T-cell (primary cell): ENCODE measurements at regions of chr19 and their contacts with region 1.

Region 1: GRCh38 chr19:47142779-47143178 is 12.1 kb downstream of the SAE1 start:
- DNase-seq: no peak
- ATAC-seq: no peak
- H3K4me3 ChIP-seq: no peak overlapping the region
- H3K4me3 Mint-ChIP-seq: no peak overlapping the region
- H3K27ac ChIP-seq: no peak overlapping the region
- H3K27ac Mint-ChIP-seq: peak overlapping the region; percentile 13 to 47
- H3K4me1 ChIP-seq: peaks cover 22 to 37% of the 10 kb centered on the region in 2 experiments
- H3K4me1 Mint-ChIP-seq: peaks cover 51 to 63% (median 52%) of the 10 kb centered on the region in 3 donors
- H3K27me3 ChIP-seq: no peaks in the 10 kb centered on the region
- H3K27me3 Mint-ChIP-seq: no peaks in the 10 kb centered on the region

Region 2: DNA sequence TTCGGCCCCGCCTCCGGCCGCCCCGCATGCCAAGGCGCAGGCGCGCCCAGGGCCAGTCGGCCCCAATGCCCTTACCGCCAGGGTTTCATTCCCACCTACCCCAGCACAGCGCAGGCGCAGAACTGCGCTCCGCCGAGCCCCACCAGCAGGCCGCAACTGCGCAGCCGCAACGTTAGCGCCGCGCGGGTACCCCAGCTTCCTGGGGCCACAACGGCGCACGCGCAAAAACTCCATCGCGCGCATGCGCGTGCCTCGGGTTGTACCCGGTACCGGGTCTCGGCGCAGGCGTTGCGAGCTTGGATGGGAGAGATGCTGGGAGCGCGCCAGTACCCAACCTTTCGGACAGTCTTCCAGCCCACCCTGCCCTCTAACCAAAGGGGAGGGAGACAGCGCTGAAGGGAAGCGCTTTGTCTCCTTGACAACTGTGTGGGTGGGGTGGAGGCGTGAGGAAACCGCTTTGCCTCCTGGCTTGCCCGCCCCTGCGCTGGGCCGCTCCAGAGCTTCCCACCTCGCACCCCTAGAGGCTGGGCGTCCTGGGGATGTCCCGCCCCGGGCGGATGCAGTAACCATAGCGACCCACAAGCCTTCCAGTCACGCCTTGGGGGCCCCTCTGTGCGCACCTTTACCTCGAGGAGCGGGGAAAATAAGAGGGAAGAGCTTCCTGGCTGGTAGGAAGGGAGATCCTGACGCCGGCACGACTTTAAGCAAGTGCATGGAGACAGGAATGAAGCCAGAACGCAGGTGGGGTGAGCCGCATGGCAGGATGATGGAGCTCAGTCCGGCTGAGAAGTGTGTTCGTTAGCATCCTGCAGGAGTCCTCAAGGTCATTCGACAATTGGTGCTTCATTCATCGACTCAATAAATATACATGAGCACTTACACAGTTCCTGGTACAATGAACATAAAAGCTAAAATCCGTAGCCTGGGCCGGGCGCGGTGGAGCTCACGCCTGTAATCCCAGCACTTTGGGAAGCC is 1239.8 kb before region 1 on chr19:
- CTCF ChIA-PET with region 1: no interaction called
- POLR2A ChIA-PET with region 1: interaction called in 1 of 2 experiments, 12 read pairs
- DNase-seq: peak; percentile 96 to 100 (median 99)
- ATAC-seq: peak; percentile 85 to 89 (median 86)
- H3K4me3 ChIP-seq: peak overlapping the region; percentile 83 to 88
- H3K4me3 Mint-ChIP-seq: peak overlapping the region; percentile 91 to 95 (median 93)
- H3K27ac ChIP-seq: peak overlapping the region; percentile 78
- H3K27ac Mint-ChIP-seq: peak overlapping the region; percentile 86 to 89
- H3K4me1 ChIP-seq: peaks cover 4 to 30% of the 10 kb centered on the region in 2 experiments
- H3K4me1 Mint-ChIP-seq: peaks cover 16 to 25% (median 19%) of the 10 kb centered on the region in 3 donors
- H3K27me3 ChIP-seq: peaks cover 0 to 8% of the 10 kb centered on the region in 2 experiments
- H3K27me3 Mint-ChIP-seq: peaks cover 0 to 4% of the 10 kb centered on the region in 2 donors

Region 3: GRCh38 chr19:47047763-47048405 is 94.9 kb before region 1 on chr19:
- CTCF ChIA-PET with region 1: no interaction called
- POLR2A ChIA-PET with region 1: interaction called in 1 of 2 experiments, 17 read pairs
- DNase-seq: peak; percentile 23 to 76 (median 46)
- ATAC-seq: peak; percentile 45 to 54 (median 48)
- H3K4me3 ChIP-seq: peak overlapping the region; percentile 79 to 80
- H3K4me3 Mint-ChIP-seq: peak overlapping the region; percentile 88 to 92 (median 89)
- H3K27ac ChIP-seq: peak overlapping the region; percentile 29
- H3K27ac Mint-ChIP-seq: peak overlapping the region; percentile 72 to 88
- H3K4me1 ChIP-seq: peaks cover 0 to 19% of the 10 kb centered on the region in 2 experiments
- H3K4me1 Mint-ChIP-seq: peaks cover 14 to 18% (median 16%) of the 10 kb centered on the region in 3 donors
- H3K27me3 ChIP-seq: no peaks in the 10 kb centered on the region
- H3K27me3 Mint-ChIP-seq: no peaks in the 10 kb centered on the region

Region 4: GRCh38 chr19:47157431-47158321 is 14.9 kb after region 1 on chr19:
- CTCF ChIA-PET with region 1: interaction called, 5 to 23 read pairs
- POLR2A ChIA-PET with region 1: interaction called in 1 of 2 experiments, 12 read pairs
- DNase-seq: peak in 33 of 35 experiments; percentile 9 to 72 (median 39)
- ATAC-seq: peak; percentile 32 to 50 (median 38)
- H3K4me3 ChIP-seq: peak overlapping the region; percentile 6 to 29
- H3K4me3 Mint-ChIP-seq: peak overlapping the region; percentile 29 to 80 (median 61)
- H3K27ac ChIP-seq: peak overlapping the region; percentile 68
- H3K27ac Mint-ChIP-seq: peak overlapping the region; percentile 92 to 94
- H3K4me1 ChIP-seq: peaks cover 59 to 76% of the 10 kb centered on the region in 2 experiments
- H3K4me1 Mint-ChIP-seq: peaks cover 66 to 74% (median 68%) of the 10 kb centered on the region in 3 donors
- H3K27me3 ChIP-seq: no peaks in the 10 kb centered on the region
- H3K27me3 Mint-ChIP-seq: no peaks in the 10 kb centered on the region

Region 5: DNA sequence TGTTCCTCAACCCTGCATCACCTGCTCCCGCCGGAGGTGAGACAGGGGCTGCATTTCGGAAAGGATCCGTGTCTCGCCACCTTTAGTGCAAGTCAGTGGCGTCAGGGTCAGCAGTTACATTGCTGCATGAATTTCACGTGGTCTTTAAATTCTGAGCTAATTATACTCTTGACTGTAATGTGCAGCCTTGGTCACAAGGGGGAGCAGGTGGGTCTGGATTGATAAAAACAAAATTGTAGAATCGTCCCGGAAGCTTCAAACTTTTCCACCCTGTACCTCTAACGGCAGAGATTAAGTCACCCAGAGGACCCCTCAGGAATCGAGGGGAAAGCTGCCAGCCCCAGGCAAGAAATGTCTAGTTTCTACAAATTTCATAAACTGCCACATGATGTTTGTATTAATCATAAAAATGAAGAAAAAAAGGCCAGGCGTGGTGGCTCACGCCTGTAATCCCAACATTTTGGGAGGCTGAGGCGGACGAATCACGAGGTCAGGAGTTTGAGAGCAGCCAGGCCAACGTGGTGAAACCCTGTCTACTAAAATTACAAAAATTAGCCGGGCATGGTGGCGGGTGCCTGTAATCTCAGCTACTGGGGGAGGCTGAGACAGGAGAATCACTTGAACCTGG is 68.0 kb after region 1 on chr19:
- CTCF ChIA-PET with region 1: interaction called in 1 of 2 experiments, 12 read pairs
- POLR2A ChIA-PET with region 1: interaction called, 6 to 8 read pairs
- DNase-seq: peak; percentile 49 to 89 (median 72)
- ATAC-seq: peak; percentile 67 to 91 (median 80)
- H3K4me3 ChIP-seq: no peak overlapping the region
- H3K4me3 Mint-ChIP-seq: no peak overlapping the region
- H3K27ac ChIP-seq: no peak overlapping the region
- H3K27ac Mint-ChIP-seq: peak overlapping the region; percentile 71 to 80
- H3K4me1 ChIP-seq: peaks cover 0 to 10% of the 10 kb centered on the region in 2 experiments
- H3K4me1 Mint-ChIP-seq: peaks cover 9 to 11% (median 11%) of the 10 kb centered on the region in 3 donors
- H3K27me3 ChIP-seq: no peaks in the 10 kb centered on the region
- H3K27me3 Mint-ChIP-seq: no peaks in the 10 kb centered on the region

Region 6: DNA sequence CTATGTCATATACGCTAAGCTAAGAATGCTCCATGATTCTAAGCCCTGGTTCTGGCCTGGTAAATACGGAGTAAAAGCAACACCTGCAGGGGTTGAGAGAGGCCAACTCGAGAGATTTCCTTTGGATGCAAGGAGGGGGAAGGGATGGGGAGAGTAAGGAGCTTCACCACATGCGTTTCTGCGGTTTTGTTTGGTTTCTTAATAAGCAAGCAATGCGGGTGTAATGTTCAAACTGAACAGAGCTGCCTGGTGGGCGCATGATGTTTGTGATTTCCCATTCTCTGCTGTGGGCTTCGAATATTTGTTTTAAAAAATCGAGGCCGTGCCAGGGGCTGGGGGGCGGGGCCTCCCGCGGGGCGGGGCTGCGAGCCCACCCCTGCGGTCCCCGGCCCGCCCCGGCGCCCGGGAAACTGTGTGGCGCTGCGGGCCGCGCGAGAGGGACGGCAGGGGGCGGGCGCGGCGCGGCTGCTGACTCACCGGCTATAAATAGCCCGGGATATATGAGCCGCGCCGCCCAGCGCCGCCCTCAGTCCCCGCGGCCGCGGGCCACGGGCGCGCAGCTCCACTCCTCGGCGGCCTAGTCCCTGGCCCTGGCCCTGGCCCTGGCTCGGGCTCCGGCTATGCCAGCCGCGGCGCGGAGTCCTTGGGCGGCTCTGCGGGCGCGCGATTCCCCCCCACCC is 83.1 kb after region 1 on chr19:
- CTCF ChIA-PET with region 1: interaction called, 4 to 16 read pairs
- POLR2A ChIA-PET with region 1: no interaction called
- DNase-seq: peak; percentile 68 to 94 (median 82)
- ATAC-seq: peak; percentile 61 to 63 (median 62)
- H3K4me3 ChIP-seq: peak overlapping the region in 1 of 2 donors; percentile 53
- H3K4me3 Mint-ChIP-seq: peak overlapping the region in 2 of 3 donors; percentile 41 to 74
- H3K27ac ChIP-seq: peak overlapping the region; percentile 54
- H3K27ac Mint-ChIP-seq: peak overlapping the region; percentile 74 to 92
- H3K4me1 ChIP-seq: peaks cover 27 to 44% of the 10 kb centered on the region in 2 experiments
- H3K4me1 Mint-ChIP-seq: peaks cover 12 to 16% (median 16%) of the 10 kb centered on the region in 3 donors
- H3K27me3 ChIP-seq: peaks cover 0 to 2% of the 10 kb centered on the region in 2 experiments
- H3K27me3 Mint-ChIP-seq: no peaks in the 10 kb centered on the region

Region 7: GRCh38 chr19:47296036-47296435 is 153.3 kb after region 1 on chr19:
- CTCF ChIA-PET with region 1: no interaction called
- POLR2A ChIA-PET with region 1: interaction called in 1 of 2 experiments, 10 read pairs
- DNase-seq: peak; percentile 19 to 90 (median 63)
- ATAC-seq: peak; percentile 73 to 91 (median 82)
- H3K4me3 ChIP-seq: no peak overlapping the region
- H3K4me3 Mint-ChIP-seq: no peak overlapping the region
- H3K27ac ChIP-seq: no peak overlapping the region
- H3K27ac Mint-ChIP-seq: no peak overlapping the region
- H3K4me1 ChIP-seq: peaks cover 0 to 9% of the 10 kb centered on the region in 2 experiments
- H3K4me1 Mint-ChIP-seq: peaks cover 4 to 13% (median 9%) of the 10 kb centered on the region in 3 donors
- H3K27me3 ChIP-seq: no peaks in the 10 kb centered on the region
- H3K27me3 Mint-ChIP-seq: no peaks in the 10 kb centered on the region